ENCODE measurements at regions of chr13 and their contacts with region 1.

Region 1: GRCh38 chr13:41182231-41182630 is 12.1 kb downstream of the KBTBD7 start:
- DNase-seq: peak; percentile 63
- H3K4me3 ChIP-seq: no peak overlapping the region
- H3K27ac ChIP-seq: peak overlapping the region; percentile 21
- H3K4me1 ChIP-seq: peaks cover 10% of the 10 kb centered on the region
- H3K27me3 ChIP-seq: no peaks in the 10 kb centered on the region
- CTCF ChIP-seq: no peak

Region 2: DNA sequence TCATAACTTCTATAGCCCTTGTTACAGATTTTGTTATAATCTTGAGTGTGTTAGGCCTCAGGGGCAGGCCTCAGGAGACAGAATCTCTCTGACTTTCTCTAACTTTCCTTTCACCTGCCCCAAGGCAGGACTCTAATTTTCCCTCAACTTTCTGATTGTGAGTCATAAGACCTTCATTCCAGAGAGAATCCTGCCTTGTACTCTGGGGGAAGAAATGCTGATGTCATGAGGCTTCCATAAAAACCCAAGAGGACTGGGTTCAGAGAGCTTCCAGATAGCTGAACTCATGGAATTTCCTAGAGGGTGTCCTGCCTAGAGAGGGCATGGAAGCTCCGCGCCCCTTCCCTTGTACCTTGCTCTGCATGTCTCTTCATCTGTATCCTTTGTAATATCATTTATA is 44.3 kb before region 1 on chr13:
- CTCF ChIA-PET with region 1: no interaction called
- dilution Hi-C with region 1: no loop called
- in situ Hi-C with region 1: no loop called
- intact Hi-C with region 1: loop called (anchors 1 kb)
- DNase-seq: peak; percentile 96
- H3K4me3 ChIP-seq: no peak overlapping the region
- H3K27ac ChIP-seq: peak overlapping the region; percentile 99
- H3K4me1 ChIP-seq: peaks cover 38% of the 10 kb centered on the region
- H3K27me3 ChIP-seq: no peaks in the 10 kb centered on the region
- CTCF ChIP-seq: no peak

Measured in mammary epithelial cell (primary cell).